ENCODE measurements at regions of chr17 and their contacts with region 1.

Region 1: DNA sequence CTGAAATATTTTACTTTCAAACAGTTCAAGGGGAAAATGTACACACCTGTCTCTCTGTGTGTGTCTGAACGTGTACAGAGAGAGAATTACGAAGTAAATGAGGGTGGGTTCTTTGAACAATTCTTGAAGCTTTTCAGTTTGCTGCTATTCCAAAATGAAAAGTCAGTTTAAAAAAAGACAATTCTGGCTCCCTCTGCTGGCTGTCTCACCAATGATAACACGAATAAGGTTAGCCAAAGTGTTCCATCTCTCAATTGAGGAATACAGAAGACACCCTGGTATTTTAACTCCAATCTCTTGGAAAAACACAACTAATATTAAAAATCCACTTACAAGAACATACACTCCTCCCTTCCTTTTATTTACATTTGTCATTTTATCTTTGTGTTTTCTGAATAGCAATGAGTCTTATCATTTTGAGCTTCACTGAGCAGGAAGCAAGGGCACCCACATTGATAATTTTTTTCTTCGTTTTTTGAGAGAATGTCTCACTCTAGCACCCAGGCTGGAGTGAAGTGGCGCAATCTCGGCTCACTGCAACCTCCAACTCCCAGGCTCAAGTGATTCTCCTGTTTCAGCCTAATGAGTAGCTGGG is 20.5 kb downstream of the EFTUD2 start:
- DNase-seq: no peak
- ATAC-seq: no peak
- H3K4me3 Mint-ChIP-seq: no peak overlapping the region
- H3K27ac Mint-ChIP-seq: no peak overlapping the region
- H3K4me1 Mint-ChIP-seq: no peaks in the 10 kb centered on the region
- H3K27me3 Mint-ChIP-seq: no peaks in the 10 kb centered on the region
- CTCF ChIP-seq: no peak

Region 2: DNA sequence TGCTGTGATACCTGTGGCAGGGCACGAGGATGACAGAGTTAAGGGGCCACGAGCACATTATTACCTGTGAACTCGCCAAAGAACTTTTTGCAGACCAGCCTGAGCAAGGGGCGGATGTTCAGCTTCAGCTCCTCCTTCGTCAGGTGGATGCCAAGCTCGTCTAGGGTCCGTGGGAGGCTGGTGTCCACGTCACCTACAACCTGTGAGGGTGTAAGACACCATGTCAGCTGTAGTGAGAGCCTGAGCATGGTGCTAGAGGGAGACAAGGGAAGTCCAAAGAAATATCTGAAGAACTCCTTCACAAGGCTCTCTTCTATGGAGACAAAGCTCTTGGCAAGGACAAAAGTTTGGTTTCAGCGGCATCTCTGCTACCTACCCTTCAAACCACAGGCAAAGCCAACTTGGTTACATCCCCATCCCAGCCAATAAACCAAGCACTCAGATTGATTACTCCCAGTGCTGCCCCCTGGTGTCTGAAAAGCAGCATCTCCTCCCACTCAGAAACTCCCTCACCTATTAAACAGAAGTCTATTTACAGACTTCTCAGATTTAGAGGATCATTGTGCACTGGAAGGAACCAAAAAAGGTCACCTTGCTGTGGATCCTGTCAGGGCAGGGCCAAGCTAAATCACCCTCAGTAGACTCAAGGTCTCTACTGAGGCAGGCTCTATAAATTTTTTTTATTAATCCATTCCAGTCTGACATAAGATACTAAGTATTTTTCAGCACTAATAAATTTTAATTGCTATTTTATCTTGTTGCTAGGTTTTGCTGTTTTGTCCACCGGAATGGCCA is 13.7 kb before region 1 on chr17:
- CTCF ChIA-PET with region 1: interaction called, 6 read pairs
- POLR2A ChIA-PET with region 1: interaction called, 6 read pairs
- intact Hi-C with region 1: loop called (anchors 2 kb)
- DNase-seq: peak; percentile 26
- ATAC-seq: peak; percentile 52
- H3K4me3 Mint-ChIP-seq: no peak overlapping the region
- H3K27ac Mint-ChIP-seq: no peak overlapping the region
- H3K4me1 Mint-ChIP-seq: no peaks in the 10 kb centered on the region
- H3K27me3 Mint-ChIP-seq: no peaks in the 10 kb centered on the region
- CTCF ChIP-seq: peak; percentile 41

Measured in activated B cell treated with CpG ODN at 0.5 μM for 24 hours (primary cell).